MCF 10A (cell line): ENCODE measurements at regions of chr1 and their contacts with region 1.

Region 1: DNA sequence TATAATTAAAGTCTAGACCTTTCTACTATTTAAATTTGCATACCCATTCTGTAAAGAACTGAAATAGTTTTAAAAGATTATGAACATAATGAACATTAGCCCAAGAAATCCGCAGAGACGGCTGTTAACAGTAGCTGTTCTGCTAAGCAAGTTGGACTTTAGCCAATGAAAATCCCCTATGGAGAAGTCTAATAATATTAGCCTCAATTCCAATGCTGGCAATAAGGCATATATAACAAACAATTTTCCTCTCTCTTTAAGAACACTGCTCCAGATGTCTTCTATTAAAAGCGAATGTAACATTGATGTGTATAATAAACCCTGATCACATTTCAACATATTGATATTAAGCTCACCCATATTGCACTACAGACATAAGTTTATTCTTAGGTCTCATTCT is 221.3 kb upstream of the KCTD3 start:
- DNase-seq: no peak
- H3K4me3 Mint-ChIP-seq: no peak overlapping the region
- H3K27ac Mint-ChIP-seq: no peak overlapping the region
- H3K4me1 Mint-ChIP-seq: no peaks in the 10 kb centered on the region
- H3K27me3 Mint-ChIP-seq: no peaks in the 10 kb centered on the region
- CTCF ChIP-seq: no peak

Region 2: DNA sequence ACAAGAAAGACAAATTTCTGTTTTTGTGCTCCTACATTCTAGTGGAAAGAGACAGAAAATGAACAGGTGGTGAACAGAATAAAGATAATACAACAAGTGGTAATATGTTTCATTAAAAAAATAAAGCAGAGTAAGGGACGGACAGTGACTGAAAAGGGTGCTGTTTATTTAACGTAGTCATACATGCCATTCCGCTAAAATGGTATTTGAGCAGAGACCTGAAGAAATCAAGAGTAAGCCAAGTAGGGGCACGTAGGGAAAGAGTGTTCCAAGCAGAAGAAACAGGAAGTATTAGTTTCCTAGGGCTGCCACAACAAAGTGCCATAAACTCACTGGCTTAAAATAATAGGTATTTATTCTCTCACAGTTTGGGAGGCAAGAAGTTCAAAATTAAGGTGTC is 155.7 kb after region 1 on chr1:
- CTCF ChIA-PET with region 1: no interaction called
- POLR2A ChIA-PET with region 1: no interaction called
- intact Hi-C with region 1: loop called (anchors 5 kb)
- DNase-seq: no peak
- H3K4me3 Mint-ChIP-seq: no peak overlapping the region
- H3K27ac Mint-ChIP-seq: peak overlapping the region; percentile 79
- H3K4me1 Mint-ChIP-seq: peaks cover 14% of the 10 kb centered on the region
- H3K27me3 Mint-ChIP-seq: no peaks in the 10 kb centered on the region
- CTCF ChIP-seq: no peak